Mammary epithelial cell (primary cell): ENCODE measurements at regions of chr14 and their contacts with region 1.

Region 1: DNA sequence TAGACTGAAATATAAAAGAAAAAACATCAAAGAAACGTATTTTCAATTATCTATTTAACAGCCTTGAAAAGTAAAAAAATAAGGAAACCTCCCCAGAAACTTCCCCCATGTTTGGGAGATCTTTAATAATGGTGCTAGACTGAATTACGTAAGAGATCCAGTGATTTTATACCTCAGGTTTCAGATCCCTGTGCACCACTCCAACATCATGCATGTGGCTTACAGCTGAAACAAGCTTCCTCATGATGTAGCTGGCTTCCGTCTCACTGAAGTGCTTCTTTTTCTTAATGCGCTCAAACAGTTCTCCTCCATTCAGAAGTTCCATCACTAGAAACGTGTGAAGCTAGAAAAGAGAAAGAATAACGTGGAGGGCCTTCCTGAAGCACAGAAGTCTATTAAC is 78.0 kb upstream of the TTC7B start:
- DNase-seq: no peak
- H3K4me3 ChIP-seq: no peak overlapping the region
- H3K27ac ChIP-seq: no peak overlapping the region
- H3K4me1 ChIP-seq: no peaks in the 10 kb centered on the region
- H3K27me3 ChIP-seq: no peaks in the 10 kb centered on the region
- CTCF ChIP-seq: no peak

Region 2: DNA sequence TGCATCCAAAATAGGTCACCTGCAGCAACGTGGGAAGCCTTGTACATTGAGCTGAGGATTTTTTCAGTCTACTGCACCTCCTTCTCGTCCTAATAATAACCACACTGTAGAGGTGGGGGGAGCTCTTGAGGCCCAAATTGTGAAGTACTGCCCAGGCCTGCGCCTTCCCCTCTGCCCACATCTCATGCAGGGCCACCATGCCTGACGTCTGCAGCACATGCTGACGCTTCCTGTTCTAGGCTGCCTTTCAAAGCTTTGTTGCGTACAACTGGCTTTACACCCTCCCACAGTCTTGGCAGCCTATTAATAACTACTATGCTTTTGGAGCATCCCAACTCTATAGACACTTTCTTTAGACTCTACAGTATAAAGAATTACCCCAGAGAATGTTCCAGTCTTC is 51.5 kb before region 1 on chr14:
- CTCF ChIA-PET with region 1: no interaction called
- dilution Hi-C with region 1: no loop called
- in situ Hi-C with region 1: no loop called
- intact Hi-C with region 1: no loop called
- DNase-seq: no peak
- H3K4me3 ChIP-seq: no peak overlapping the region
- H3K27ac ChIP-seq: no peak overlapping the region
- H3K4me1 ChIP-seq: peaks cover 14% of the 10 kb centered on the region
- H3K27me3 ChIP-seq: no peaks in the 10 kb centered on the region
- CTCF ChIP-seq: no peak

Region 3: DNA sequence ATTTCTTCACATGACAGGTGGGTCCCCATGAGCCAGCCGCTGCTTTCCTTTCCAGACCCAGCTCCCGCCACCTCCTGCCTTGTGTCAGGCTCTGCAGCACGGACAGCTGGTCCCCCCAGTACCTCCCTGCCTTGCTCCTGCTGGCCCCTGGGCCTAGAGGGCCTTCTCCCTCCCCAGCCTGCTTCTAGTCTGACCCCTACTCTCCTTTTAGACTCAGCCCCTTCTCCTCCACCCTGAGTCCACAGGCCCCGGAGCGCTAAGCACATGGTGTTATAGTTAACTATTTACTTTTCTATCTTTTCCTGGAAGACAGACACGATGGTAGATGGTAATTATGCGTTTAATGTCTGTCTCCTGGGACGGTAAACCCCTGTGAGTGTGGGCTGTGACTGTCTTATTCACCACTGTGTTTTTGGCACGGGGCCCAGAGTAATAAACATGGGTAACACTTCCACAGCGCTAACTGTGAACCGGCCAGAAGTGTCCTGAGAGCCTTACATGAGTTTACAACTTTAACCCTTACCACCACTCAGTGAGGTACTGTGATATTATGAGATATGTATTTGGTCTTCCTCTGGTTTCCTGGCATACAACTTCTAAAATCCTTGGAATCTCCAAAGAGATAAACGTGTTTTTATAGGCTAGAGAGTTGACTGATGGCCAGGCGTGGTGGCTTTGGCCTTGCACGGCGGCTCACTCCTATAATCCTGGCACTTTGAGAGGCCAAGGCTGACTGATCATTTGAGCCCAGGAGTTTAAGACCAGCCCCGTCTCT is 260.8 kb after region 1 on chr14:
- CTCF ChIA-PET with region 1: no interaction called
- dilution Hi-C with region 1: no loop called
- in situ Hi-C with region 1: no loop called
- intact Hi-C with region 1: no loop called
- DNase-seq: peak; percentile 62
- H3K4me3 ChIP-seq: no peak overlapping the region
- H3K27ac ChIP-seq: no peak overlapping the region
- H3K4me1 ChIP-seq: peaks cover 25% of the 10 kb centered on the region
- H3K27me3 ChIP-seq: no peaks in the 10 kb centered on the region
- CTCF ChIP-seq: no peak

Region 4: DNA sequence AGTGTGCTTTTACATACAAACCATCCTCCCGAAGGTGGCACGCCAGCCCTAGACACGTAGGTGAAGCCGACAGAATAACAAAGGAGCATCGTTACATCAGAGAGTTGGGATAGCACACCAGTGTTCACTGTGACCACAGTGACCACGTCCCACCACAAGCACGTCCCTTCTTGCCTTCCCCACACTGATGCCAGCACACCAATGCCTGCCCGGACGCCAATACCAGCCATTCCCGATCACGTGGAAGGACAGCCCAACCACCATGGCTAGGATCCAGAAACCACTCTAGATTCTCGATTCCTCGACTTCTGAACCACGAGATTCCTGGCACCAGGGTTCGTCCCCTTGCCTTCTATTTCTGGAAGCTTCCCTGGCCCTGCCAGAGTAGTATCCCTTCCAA is 398.2 kb after region 1 on chr14:
- CTCF ChIA-PET with region 1: no interaction called
- dilution Hi-C with region 1: loop called (anchors 5 kb)
- in situ Hi-C with region 1: no loop called
- intact Hi-C with region 1: no loop called
- DNase-seq: peak; percentile 91
- H3K4me3 ChIP-seq: no peak overlapping the region
- H3K27ac ChIP-seq: no peak overlapping the region
- H3K4me1 ChIP-seq: peaks cover 15% of the 10 kb centered on the region
- H3K27me3 ChIP-seq: peaks cover 7% of the 10 kb centered on the region
- CTCF ChIP-seq: no peak